Left cardiac atrium (tissue), 4 donors: ENCODE measurements at regions of chr3 and their contacts with region 1.

Region 1: DNA sequence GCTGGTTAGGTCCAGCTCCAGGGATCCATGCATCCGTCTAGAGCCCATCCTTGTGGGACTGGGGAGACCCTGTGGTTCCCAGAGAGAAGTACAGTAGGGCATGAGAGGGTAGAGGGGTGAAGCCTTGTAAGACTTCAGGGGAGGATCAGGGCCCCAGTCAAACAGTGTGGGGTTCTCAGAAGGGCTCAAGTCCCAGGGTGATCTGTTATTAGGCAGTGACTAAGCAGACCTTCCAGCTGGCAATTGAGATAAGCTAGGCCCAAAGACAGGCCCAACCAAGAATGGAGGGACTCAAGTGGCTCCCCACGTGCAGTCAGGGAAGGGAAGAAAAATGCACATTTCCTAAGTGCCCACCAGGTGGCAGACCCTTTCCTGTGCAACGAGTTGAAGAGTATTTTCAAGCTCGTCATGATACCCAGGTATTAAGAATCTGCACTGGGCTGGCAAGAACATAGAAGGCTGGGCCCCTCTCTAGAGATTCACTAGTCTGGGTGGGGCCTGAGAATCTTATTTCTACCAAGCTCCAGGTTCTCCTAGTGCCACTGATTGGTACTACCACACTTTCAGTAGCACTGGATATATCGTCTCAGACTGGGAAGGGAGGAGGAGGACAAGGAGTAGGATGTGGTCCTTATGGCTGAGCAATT is 240.8 kb downstream of the NR1D2 start:
- DNase-seq: peak; percentile 38
- ATAC-seq: peak; percentile 61 to 70

Region 2: DNA sequence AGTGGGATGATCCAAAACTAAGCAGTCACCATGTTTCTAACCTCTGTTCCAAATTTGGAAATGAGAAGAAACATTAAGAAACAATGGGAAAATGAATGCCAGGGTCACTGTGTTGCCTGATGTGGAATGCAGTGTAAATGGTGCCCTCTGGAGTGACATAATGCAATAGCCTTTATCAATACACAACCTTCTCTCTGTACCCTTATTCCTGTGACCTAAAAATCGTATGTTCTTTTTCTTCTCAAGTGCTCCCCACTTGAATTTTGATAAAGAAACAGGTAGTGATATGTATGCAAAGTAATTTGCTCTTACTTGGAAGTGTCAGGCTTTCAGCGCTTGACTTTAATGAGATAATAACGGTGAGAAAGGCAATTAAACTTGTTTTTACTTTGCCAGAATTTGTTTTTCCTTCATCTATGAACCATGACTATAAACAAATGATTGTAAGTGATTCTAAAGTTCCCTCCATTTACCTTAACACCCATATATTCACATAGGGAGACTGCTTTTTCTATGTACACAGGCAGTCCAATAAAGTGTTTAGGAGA is 454.5 kb after region 1 on chr3:
- intact Hi-C with region 1: loop called in 1 of 2 experiments (anchors 5 kb)
- DNase-seq: no peak
- ATAC-seq: peak; percentile 47 to 79